Naive thymus-derived CD4-positive, alpha-beta T cell (primary cell): ENCODE measurements at regions of chr10 and their contacts with region 1.

Region 1: GRCh38 chr10:6514844-6515780 is 65.0 kb downstream of the PRKCQ start:
- DNase-seq: no peak
- ATAC-seq: peak; percentile 74
- H3K4me3 ChIP-seq: no peak overlapping the region
- H3K4me3 Mint-ChIP-seq: peak overlapping the region in 1 of 10 donors; percentile 12
- H3K27ac ChIP-seq: no peak overlapping the region
- H3K27ac Mint-ChIP-seq: peak overlapping the region in 7 of 9 donors; percentile 17 to 83 (median 50)
- H3K4me1 ChIP-seq: peaks cover 35 to 48% of the 10 kb centered on the region in 2 donors
- H3K4me1 Mint-ChIP-seq: peaks cover 49 to 92% (median 80%) of the 10 kb centered on the region in 7 donors
- H3K27me3 ChIP-seq: no peaks in the 10 kb centered on the region
- H3K27me3 Mint-ChIP-seq: no peaks in the 10 kb centered on the region

Region 2: GRCh38 chr10:6254201-6254600 is 260.9 kb before region 1 on chr10:
- CTCF ChIA-PET with region 1: no interaction called
- POLR2A ChIA-PET with region 1: no interaction called
- intact Hi-C with region 1: no loop called
- DNase-seq: no peak
- ATAC-seq: peak; percentile 81
- H3K4me3 ChIP-seq: no peak overlapping the region
- H3K4me3 Mint-ChIP-seq: no peak overlapping the region
- H3K27ac ChIP-seq: no peak overlapping the region
- H3K27ac Mint-ChIP-seq: no peak overlapping the region
- H3K4me1 ChIP-seq: no peaks in the 10 kb centered on the region
- H3K4me1 Mint-ChIP-seq: peaks cover 0 to 6% (median 0%) of the 10 kb centered on the region in 7 donors
- H3K27me3 ChIP-seq: no peaks in the 10 kb centered on the region
- H3K27me3 Mint-ChIP-seq: no peaks in the 10 kb centered on the region

Region 3: DNA sequence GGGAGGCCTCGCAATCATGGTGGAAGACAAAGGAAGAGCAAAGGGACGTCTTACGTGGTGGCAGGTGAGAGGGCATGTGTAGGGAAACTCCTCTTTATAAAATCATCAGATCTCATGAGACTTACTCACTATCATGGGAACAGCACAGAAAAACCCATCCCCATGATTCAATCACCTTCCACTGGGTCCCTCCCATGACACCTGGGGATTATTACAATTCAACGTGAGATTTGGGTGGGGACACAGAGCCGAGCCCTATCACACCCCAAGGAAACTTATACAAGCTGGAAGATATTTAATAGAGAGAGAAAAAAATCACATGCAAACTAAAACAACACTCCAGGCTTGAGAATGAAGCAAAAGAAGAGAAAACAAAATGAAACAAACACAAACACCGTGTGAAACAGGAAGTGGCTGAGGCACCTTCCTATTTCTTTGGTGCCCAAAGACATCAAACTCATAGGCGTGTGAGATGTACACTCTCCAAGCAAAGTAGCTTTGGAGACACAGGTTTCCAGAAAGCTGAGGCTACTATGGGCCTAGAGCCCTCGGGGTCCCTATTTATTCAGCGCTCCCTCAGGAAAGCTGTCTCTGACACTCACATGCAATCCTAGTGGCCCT is 32.3 kb before region 1 on chr10:
- CTCF ChIA-PET with region 1: no interaction called
- POLR2A ChIA-PET with region 1: no interaction called
- intact Hi-C with region 1: loop called in 1 of 2 experiments (anchors 5 kb)
- DNase-seq: no peak
- ATAC-seq: peak; percentile 60
- H3K4me3 ChIP-seq: no peak overlapping the region
- H3K4me3 Mint-ChIP-seq: peak overlapping the region; percentile 7 to 76 (median 51)
- H3K27ac ChIP-seq: peak overlapping the region; percentile 32
- H3K27ac Mint-ChIP-seq: peak overlapping the region; percentile 15 to 92 (median 78)
- H3K4me1 ChIP-seq: peaks cover 15 to 25% of the 10 kb centered on the region in 2 donors
- H3K4me1 Mint-ChIP-seq: peaks cover 25 to 64% (median 42%) of the 10 kb centered on the region in 7 donors
- H3K27me3 ChIP-seq: no peaks in the 10 kb centered on the region
- H3K27me3 Mint-ChIP-seq: no peaks in the 10 kb centered on the region

Region 4: DNA sequence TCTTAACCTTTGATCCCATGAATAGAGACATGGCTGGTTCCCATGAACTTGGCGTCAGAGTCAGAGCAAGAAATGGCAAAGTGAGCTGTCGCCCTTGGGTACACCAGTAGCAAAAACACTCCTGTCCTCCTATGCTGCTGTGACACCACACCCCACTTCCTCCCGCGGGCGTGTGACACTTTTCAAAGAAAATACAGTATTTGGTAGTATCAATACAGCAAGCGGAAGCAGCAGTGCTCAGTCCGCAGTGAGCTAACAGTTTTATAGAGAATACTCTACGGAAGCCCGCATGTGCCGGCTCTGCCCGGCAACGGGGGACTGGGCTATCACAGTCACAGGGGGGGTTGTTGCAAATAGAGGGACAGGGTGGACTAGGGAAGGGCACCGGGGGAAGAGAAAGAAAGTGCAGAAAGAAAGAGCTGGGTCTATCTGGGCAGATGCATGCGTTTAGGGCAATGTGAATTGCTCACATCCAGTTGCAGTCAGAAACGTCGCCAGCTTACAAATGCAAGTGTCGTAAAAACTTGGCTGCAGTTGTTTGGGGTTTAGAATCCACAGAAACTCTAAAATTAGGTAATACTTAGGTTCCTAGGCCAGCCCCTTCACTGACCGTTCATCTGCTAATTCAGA is 15.2 kb after region 1 on chr10:
- CTCF ChIA-PET with region 1: interaction called, 11 read pairs
- POLR2A ChIA-PET with region 1: interaction called, 42 read pairs
- intact Hi-C with region 1: loop called (anchors 1 kb)
- DNase-seq: peak; percentile 37 to 89 (median 85)
- ATAC-seq: peak; percentile 96
- H3K4me3 ChIP-seq: peak overlapping the region; percentile 34
- H3K4me3 Mint-ChIP-seq: peak overlapping the region; percentile 84 to 95 (median 88)
- H3K27ac ChIP-seq: peak overlapping the region; percentile 74
- H3K27ac Mint-ChIP-seq: peak overlapping the region; percentile 97 to 100 (median 99)
- H3K4me1 ChIP-seq: peaks cover 46 to 58% of the 10 kb centered on the region in 2 donors
- H3K4me1 Mint-ChIP-seq: peaks cover 67 to 99% (median 91%) of the 10 kb centered on the region in 7 donors
- H3K27me3 ChIP-seq: no peaks in the 10 kb centered on the region
- H3K27me3 Mint-ChIP-seq: no peaks in the 10 kb centered on the region

Region 5: GRCh38 chr10:6563075-6563474 is 48.0 kb after region 1 on chr10:
- CTCF ChIA-PET with region 1: interaction called, 3 read pairs
- POLR2A ChIA-PET with region 1: interaction called, 4 read pairs
- intact Hi-C with region 1: loop called in 1 of 2 experiments (anchors 5 kb)
- DNase-seq: peak in 4 of 9 donors; percentile 33 to 60 (median 39)
- ATAC-seq: peak; percentile 56
- H3K4me3 ChIP-seq: peak overlapping the region; percentile 42
- H3K4me3 Mint-ChIP-seq: peak overlapping the region; percentile 69 to 89 (median 80)
- H3K27ac ChIP-seq: peak overlapping the region; percentile 46
- H3K27ac Mint-ChIP-seq: peak overlapping the region; percentile 47 to 94 (median 87)
- H3K4me1 ChIP-seq: peaks cover 69 to 73% of the 10 kb centered on the region in 2 donors
- H3K4me1 Mint-ChIP-seq: peaks cover 65 to 96% (median 91%) of the 10 kb centered on the region in 7 donors
- H3K27me3 ChIP-seq: no peaks in the 10 kb centered on the region
- H3K27me3 Mint-ChIP-seq: no peaks in the 10 kb centered on the region

Region 6: GRCh38 chr10:6647811-6648526 is 132.9 kb after region 1 on chr10:
- CTCF ChIA-PET with region 1: interaction called, 3 read pairs
- POLR2A ChIA-PET with region 1: no interaction called
- intact Hi-C with region 1: loop called in 1 of 2 experiments (anchors 1 kb)
- DNase-seq: peak; percentile 37 to 75 (median 64)
- ATAC-seq: peak; percentile 94
- H3K4me3 ChIP-seq: no peak overlapping the region
- H3K4me3 Mint-ChIP-seq: peak overlapping the region in 1 of 10 donors; percentile 32
- H3K27ac ChIP-seq: no peak overlapping the region
- H3K27ac Mint-ChIP-seq: peak overlapping the region in 3 of 9 donors; percentile 19 to 67 (median 38)
- H3K4me1 ChIP-seq: peaks cover 5 to 10% of the 10 kb centered on the region in 2 donors
- H3K4me1 Mint-ChIP-seq: peaks cover 0 to 46% (median 27%) of the 10 kb centered on the region in 7 donors
- H3K27me3 ChIP-seq: no peaks in the 10 kb centered on the region
- H3K27me3 Mint-ChIP-seq: no peaks in the 10 kb centered on the region

Region 7: GRCh38 chr10:6737758-6738505 is 222.8 kb after region 1 on chr10:
- CTCF ChIA-PET with region 1: no interaction called
- POLR2A ChIA-PET with region 1: no interaction called
- intact Hi-C with region 1: no loop called
- DNase-seq: no peak
- ATAC-seq: no peak
- H3K4me3 ChIP-seq: no peak overlapping the region
- H3K4me3 Mint-ChIP-seq: peak overlapping the region in 3 of 10 donors; percentile 19 to 33 (median 32)
- H3K27ac ChIP-seq: no peak overlapping the region
- H3K27ac Mint-ChIP-seq: no peak overlapping the region
- H3K4me1 ChIP-seq: no peaks in the 10 kb centered on the region
- H3K4me1 Mint-ChIP-seq: peaks cover 0 to 9% (median 0%) of the 10 kb centered on the region in 7 donors
- H3K27me3 ChIP-seq: peaks cover 0 to 5% of the 10 kb centered on the region in 2 donors
- H3K27me3 Mint-ChIP-seq: peaks cover 23 to 43% (median 36%) of the 10 kb centered on the region in 5 donors